ENCODE measurements at regions of chr22 and their contacts with region 1.

Region 1: GRCh38 chr22:30968924-30969539 is at the start of gene TUG1:
- DNase-seq: peak; percentile 98 to 99
- ATAC-seq: peak; percentile 97 to 100 (median 98)
- H3K4me3 ChIP-seq: peak within 1 kb of the TSS; percentile 76 to 91 (median 84)
- H3K27ac ChIP-seq: peak within 1 kb of the TSS; percentile 88 to 99 (median 96)
- H3K4me1 ChIP-seq: peaks cover 4 to 59% (median 39%) of the 10 kb centered on the region in 9 donors
- H3K27me3 ChIP-seq: no peaks in the 10 kb centered on the region
- CTCF ChIP-seq: no peak
- total RNA-seq, gene TUG1: 37.7 to 48.4 (median 44.2) TPM

Region 2: GRCh38 chr22:30289134-30289979 is 679.7 kb before region 1 on chr22 and contains the start of gene CASTOR1:
- intact Hi-C with region 1: no loop called
- DNase-seq: peak; percentile 99
- ATAC-seq: peak; percentile 87 to 92 (median 91)
- H3K4me3 ChIP-seq: peak within 1 kb of the TSS; percentile 56 to 99 (median 92)
- H3K27ac ChIP-seq: peak within 1 kb of the TSS; percentile 83 to 98 (median 93)
- H3K4me1 ChIP-seq: peaks cover 17 to 49% (median 39%) of the 10 kb centered on the region in 9 donors
- H3K27me3 ChIP-seq: no peaks in the 10 kb centered on the region
- CTCF ChIP-seq: peak in 1 of 9 donors; percentile 6
- total RNA-seq, gene CASTOR1: 2.8 to 7.9 (median 5.4) TPM

Region 3: GRCh38 chr22:31036671-31037550 is 67.9 kb after region 1 on chr22:
- intact Hi-C with region 1: loop called in 2 of 10 experiments (anchors 5 to 10 kb)
- DNase-seq: no peak
- ATAC-seq: peak in 1 of 8 donors; percentile 12
- H3K4me3 ChIP-seq: peak overlapping the region in 6 of 10 donors; percentile 9 to 26 (median 15)
- H3K27ac ChIP-seq: peak overlapping the region in 9 of 10 donors; percentile 0 to 77 (median 47)
- H3K4me1 ChIP-seq: peaks cover 6 to 36% (median 15%) of the 10 kb centered on the region in 9 donors
- H3K27me3 ChIP-seq: no peaks in the 10 kb centered on the region
- CTCF ChIP-seq: no peak

Region 4: DNA sequence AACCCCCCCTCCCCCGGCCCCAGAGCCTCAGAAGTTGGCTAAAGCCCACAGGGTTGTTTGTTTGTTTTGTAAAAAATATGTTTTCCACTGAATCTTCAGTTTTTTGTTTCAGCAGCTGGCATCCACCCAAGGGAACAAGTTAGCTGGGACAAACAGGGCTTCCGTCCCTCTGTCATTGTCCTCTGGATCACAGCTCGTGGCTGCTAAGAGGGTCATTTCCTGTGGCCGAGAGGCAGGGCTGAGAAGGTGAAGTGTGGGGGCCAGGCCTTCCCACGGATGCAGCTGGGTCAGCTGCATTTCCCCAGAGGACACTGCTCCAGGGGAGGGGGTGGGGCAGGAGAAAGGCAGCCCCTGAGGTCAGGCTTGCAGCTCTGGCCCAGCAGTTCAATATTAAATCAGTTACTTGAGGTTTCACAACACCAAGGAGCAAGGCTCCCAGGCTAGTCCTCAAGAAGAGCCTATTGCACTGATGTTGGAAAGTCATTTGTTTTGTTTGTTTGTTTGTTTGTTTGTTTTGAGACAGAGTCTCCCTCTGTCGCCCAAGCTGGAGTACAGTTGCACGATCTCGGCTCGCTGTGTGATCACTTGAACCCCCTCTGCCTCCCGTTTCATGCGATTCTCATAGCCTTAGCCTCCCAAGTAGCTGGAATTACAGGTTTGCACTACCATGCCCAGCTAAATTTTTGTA is 77.7 kb after region 1 on chr22:
- intact Hi-C with region 1: loop called in 1 of 10 experiments (anchors 2 kb)
- DNase-seq: peak; percentile 80 to 93
- ATAC-seq: peak; percentile 87 to 96 (median 92)
- H3K4me3 ChIP-seq: peak overlapping the region in 1 of 10 donors; percentile 19
- H3K27ac ChIP-seq: peak overlapping the region; percentile 68 to 91 (median 82)
- H3K4me1 ChIP-seq: peaks cover 14 to 81% (median 58%) of the 10 kb centered on the region in 9 donors
- H3K27me3 ChIP-seq: no peaks in the 10 kb centered on the region
- CTCF ChIP-seq: no peak

Region 5: GRCh38 chr22:31160328-31160978 is 191.4 kb after region 1 on chr22:
- intact Hi-C with region 1: loop called in 1 of 10 experiments (anchors 5 kb)
- DNase-seq: no peak
- ATAC-seq: peak; percentile 27 to 71 (median 58)
- H3K4me3 ChIP-seq: peak overlapping the region; percentile 59 to 95 (median 82)
- H3K27ac ChIP-seq: peak overlapping the region; percentile 47 to 95 (median 88)
- H3K4me1 ChIP-seq: peaks cover 2 to 43% (median 35%) of the 10 kb centered on the region in 9 donors
- H3K27me3 ChIP-seq: no peaks in the 10 kb centered on the region
- CTCF ChIP-seq: peak in 1 of 9 donors; percentile 2

Region 6: GRCh38 chr22:31230871-31231621 is 262.0 kb after region 1 on chr22:
- intact Hi-C with region 1: loop called in 1 of 10 experiments (anchors 5 kb)
- DNase-seq: peak in 1 of 2 donors; percentile 57
- ATAC-seq: peak; percentile 65 to 84 (median 78)
- H3K4me3 ChIP-seq: no peak overlapping the region
- H3K27ac ChIP-seq: peak overlapping the region in 9 of 10 donors; percentile 71 to 94 (median 77)
- H3K4me1 ChIP-seq: peaks cover 7 to 100% (median 56%) of the 10 kb centered on the region in 9 donors
- H3K27me3 ChIP-seq: no peaks in the 10 kb centered on the region
- CTCF ChIP-seq: peak; percentile 44 to 85 (median 74)

Measured in heart right ventricle (tissue), 16 donors.